Heart right ventricle (tissue), 16 donors: ENCODE measurements at regions of chr12 and their contacts with region 1.

Region 1: DNA sequence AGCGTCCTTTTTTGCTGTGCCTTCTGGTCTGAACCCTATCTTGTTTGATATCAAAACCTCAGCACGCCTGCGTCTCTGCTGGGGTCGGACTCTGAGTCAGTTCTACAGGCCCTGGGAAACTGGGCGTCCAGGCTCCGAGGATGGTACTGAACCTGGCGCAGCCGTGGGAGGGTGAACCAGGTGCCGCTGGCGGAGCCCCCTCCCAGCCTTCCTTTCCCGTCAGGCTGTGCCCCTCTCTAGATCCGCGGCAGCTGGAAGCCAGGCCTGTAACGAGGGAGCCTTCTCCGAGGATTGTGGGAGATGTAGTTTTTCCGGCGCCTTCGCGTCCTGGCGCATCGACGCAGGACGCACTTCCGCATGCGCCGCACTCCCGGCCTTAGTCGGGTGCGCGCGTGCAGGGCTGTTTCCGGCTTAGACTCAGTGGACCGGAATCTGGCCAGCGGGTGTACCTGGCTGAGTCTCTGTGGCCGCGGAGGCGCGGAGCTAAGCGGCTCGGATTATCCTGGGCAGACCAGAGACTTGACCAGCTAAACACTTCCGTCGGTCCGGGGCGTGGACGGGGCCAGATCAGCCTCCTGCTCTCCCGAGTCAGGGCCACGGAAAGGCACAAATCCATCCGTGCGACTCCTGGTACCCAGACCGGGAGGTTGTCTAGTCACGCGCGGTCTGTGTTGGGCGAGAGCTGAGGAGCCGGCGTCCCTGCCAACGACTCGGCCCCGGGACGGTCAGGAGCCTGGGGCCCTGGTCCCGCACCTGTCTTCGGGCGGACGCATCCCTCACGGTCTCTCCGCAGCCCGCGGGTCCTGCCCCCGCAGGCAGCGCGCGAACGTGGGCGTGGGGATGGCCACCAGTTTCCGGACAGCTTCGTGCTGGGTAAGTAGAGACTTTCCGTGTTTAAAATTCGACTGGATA is at the start of gene ZNF26:
- DNase-seq: peak; percentile 89 to 93
- ATAC-seq: peak; percentile 99 to 100 (median 100)
- H3K4me3 ChIP-seq: peak within 1 kb of the TSS; percentile 83 to 99 (median 94)
- H3K27ac ChIP-seq: peak within 1 kb of the TSS; percentile 44 to 92 (median 89)
- H3K4me1 ChIP-seq: peaks cover 0 to 23% (median 14%) of the 10 kb centered on the region in 9 donors
- H3K27me3 ChIP-seq: no peaks in the 10 kb centered on the region
- CTCF ChIP-seq: no peak
- total RNA-seq, gene ZNF26: 2.8 to 6.2 (median 4.1) TPM

Region 2: DNA sequence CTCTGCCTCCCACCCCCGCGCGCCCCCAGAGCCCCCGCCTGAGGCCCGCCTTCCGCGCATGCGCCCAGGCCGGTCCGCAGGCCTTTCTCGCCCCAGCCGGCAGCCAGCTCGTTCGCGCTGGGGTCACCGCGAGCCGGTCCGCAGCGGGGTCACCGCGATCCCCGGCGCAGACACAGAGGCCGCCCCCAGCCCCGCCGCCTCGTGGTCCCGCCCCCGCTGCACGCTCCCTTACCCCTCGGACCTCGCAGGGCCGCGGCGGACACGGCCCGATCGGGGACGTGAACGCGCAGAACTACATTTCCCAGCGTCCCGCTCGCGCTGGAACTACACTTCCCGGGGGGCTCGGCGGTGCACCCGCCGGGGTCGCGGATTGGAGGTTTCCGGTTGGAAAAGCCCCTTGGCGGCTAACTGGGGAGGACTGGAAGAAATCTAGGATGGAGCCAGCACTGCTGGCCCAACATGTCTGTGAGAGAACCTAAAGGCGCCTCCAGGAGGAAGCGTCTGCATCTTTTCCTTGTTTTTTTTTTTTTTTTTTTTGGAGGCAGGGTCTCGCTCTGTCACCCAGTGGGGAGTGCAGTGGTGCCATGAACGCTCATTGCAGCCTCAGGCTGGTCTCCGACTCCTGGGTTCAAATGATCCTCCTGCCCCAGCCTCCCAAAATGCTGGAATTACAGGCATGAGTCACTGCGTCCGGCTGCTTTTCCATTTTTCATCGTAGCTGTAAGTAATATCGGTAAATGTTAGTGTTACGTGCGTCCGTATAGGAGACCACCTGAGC is 30.1 kb before region 1 on chr12 and contains the start of gene ZNF605:
- intact Hi-C with region 1: loop called in 2 of 10 experiments (anchors 1 to 2 kb)
- DNase-seq: peak; percentile 91 to 93
- ATAC-seq: peak; percentile 93 to 97 (median 96)
- H3K4me3 ChIP-seq: peak within 1 kb of the TSS; percentile 57 to 95 (median 82)
- H3K27ac ChIP-seq: peak within 1 kb of the TSS; percentile 59 to 98 (median 96)
- H3K4me1 ChIP-seq: peaks cover 0 to 26% (median 17%) of the 10 kb centered on the region in 9 donors
- H3K27me3 ChIP-seq: no peaks in the 10 kb centered on the region
- CTCF ChIP-seq: no peak
- total RNA-seq, gene ZNF605: 9.3 to 14.4 (median 12.3) TPM

Region 3: DNA sequence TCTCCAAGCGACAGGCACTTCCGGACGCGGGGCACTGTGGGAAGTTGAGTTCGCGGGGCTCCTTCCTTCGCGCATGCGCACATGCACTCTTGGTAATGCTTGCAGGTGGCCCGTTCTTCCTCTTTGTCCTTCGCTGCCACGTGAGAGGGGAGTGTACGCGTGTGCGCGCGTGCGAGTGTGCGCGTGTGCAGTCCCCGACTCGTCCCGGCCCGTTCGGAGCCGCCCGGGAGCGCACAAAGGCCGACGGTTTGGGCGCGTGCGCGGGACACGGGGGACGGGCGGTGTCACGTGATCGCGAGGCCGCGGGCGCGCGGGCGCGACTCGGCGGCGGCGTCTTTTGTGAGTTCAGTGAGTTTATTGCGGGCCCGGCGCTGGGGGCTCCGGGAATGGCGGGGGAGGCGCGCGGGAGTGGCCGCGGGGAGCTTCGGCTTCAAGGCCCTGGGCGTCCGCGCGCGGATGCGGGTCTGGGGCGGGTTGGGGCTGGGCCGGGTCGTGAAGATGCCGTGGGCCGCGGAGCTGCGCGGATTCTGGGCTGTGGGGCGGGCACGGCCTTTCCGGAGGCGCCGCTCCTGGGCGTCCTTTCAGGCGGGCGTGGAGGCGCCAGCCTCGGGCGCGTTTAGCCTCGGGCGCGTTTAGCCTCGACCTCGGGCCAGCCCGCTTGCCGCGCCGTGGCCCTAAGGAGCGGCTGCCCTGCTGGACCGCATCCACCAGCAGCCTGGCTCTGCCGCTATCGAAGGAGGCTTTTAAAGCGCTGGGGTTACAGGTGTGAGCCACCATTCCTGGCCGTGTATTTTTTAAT is 51.1 kb after region 1 on chr12 and contains the start of gene ZNF84:
- intact Hi-C with region 1: loop called in 8 of 10 experiments (anchors 2 to 10 kb)
- DNase-seq: peak; percentile 95 to 97
- ATAC-seq: peak; percentile 98 to 100 (median 99)
- H3K4me3 ChIP-seq: peak within 1 kb of the TSS; percentile 53 to 90 (median 77)
- H3K27ac ChIP-seq: peak within 1 kb of the TSS; percentile 52 to 96 (median 93)
- H3K4me1 ChIP-seq: peaks cover 0 to 14% (median 8%) of the 10 kb centered on the region in 9 donors
- H3K27me3 ChIP-seq: no peaks in the 10 kb centered on the region
- CTCF ChIP-seq: peak in 1 of 9 donors; percentile 4
- total RNA-seq, gene ZNF84: 13.3 to 23.0 (median 18.3) TPM

Region 4: GRCh38 chr12:133181238-133181959 is 195.1 kb after region 1 on chr12 and contains the start of gene ZNF268:
- intact Hi-C with region 1: loop called in 1 of 10 experiments (anchors 1 kb)
- DNase-seq: peak; percentile 92 to 95
- ATAC-seq: peak; percentile 96 to 98 (median 98)
- H3K4me3 ChIP-seq: peak within 1 kb of the TSS; percentile 57 to 96 (median 86)
- H3K27ac ChIP-seq: peak within 1 kb of the TSS in 9 of 10 donors; percentile 35 to 85 (median 69)
- H3K4me1 ChIP-seq: peaks cover 0 to 12% (median 7%) of the 10 kb centered on the region in 9 donors
- H3K27me3 ChIP-seq: no peaks in the 10 kb centered on the region
- CTCF ChIP-seq: peak; percentile 66 to 95 (median 90)
- total RNA-seq, gene ZNF268: 7.0 to 13.5 (median 11.5) TPM

Region 5: GRCh38 chr12:133192847-133193246 is 206.6 kb after region 1 on chr12:
- intact Hi-C with region 1: no loop called
- DNase-seq: no peak
- ATAC-seq: no peak
- H3K4me3 ChIP-seq: no peak overlapping the region
- H3K27ac ChIP-seq: no peak overlapping the region
- H3K4me1 ChIP-seq: no peaks in the 10 kb centered on the region
- H3K27me3 ChIP-seq: no peaks in the 10 kb centered on the region
- CTCF ChIP-seq: no peak